ENCODE measurements at regions of chr16 and their contacts with region 1.

Region 1: GRCh38 chr16:47141773-47142485 is 1.8 kb downstream of the NETO2 start:
- DNase-seq: peak; percentile 93
- H3K4me3 Mint-ChIP-seq: peak overlapping the region; percentile 75
- H3K27ac Mint-ChIP-seq: no peak overlapping the region
- H3K4me1 Mint-ChIP-seq: peaks cover 10% of the 10 kb centered on the region
- H3K27me3 Mint-ChIP-seq: peaks cover 38% of the 10 kb centered on the region

Region 2: GRCh38 chr16:46947900-46948547 is 193.9 kb before region 1 on chr16:
- CTCF ChIA-PET with region 1: interaction called, 5 read pairs
- intact Hi-C with region 1: loop called (anchors 1 kb)
- DNase-seq: peak; percentile 63
- H3K4me3 Mint-ChIP-seq: no peak overlapping the region
- H3K27ac Mint-ChIP-seq: no peak overlapping the region
- H3K4me1 Mint-ChIP-seq: peaks cover 14% of the 10 kb centered on the region
- H3K27me3 Mint-ChIP-seq: no peaks in the 10 kb centered on the region

Region 3: DNA sequence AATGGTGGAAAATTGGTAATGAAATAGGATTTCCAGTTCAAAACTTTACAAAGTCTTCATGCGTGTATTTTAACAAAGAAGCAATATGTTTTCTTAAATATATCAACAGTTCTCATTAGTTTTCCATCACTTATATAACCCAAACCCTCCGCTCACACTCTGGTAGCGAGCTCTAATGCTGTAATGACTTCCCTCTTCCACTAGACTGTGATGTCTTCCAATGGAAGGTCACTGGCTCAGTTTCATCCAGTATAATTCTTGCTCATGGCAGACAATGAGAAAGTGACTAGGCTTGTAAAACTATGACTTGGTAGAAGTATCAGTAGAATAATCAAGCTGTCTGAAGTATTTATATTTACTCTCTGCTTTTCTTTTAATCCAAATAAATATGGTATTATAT is 31.0 kb before region 1 on chr16:
- CTCF ChIA-PET with region 1: interaction called, 11 read pairs
- intact Hi-C with region 1: loop called (anchors 1 kb)
- DNase-seq: no peak
- H3K4me3 Mint-ChIP-seq: no peak overlapping the region
- H3K27ac Mint-ChIP-seq: no peak overlapping the region
- H3K4me1 Mint-ChIP-seq: peaks cover 19% of the 10 kb centered on the region
- H3K27me3 Mint-ChIP-seq: no peaks in the 10 kb centered on the region

Region 4: DNA sequence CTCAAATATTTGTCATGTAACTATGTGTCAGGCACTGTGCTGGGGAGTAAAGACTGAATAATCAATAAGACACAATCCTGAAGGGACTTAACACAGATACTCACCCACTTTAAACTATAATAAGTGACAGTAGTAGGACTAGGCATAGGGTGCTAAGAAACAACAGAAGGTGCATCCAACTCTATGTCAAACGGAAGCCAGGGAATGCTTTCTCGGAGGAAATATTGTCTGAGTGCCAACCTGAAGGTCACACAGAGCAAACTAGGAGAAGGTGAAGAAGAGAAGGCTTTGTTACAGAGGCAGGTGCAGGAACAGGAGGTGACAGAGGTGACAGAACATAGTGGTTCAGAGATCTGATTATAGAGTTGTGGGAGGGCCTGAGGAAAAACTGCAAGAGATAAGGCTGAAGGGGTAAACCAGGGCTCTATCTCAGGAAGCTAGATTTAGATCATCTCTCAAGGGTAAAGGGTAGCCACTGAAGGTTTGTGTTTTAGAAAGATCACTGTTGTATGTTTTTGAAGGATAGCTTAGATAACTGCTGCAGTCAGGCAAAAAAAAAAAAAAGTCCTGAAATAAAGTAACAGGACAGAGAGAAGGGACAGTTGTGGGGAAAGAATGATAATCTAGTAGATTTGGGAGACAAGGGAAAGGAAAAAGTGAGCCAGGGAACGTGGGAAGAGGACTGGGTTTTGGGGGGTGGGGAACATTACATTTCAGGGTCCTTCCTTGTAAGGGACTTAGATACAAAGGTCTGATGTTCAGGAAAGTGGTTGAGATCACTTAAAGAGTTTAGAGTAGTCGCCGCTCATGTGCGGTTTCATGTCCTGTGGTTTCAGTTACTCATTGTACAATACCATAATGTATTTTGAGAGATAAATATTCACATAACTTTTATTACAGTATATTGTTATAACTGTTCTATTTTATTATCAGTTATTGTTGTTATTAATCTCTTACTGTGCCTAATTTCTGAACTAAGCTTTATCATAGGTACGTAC is 87.4 kb after region 1 on chr16:
- CTCF ChIA-PET with region 1: no interaction called
- intact Hi-C with region 1: no loop called
- DNase-seq: no peak
- H3K4me3 Mint-ChIP-seq: no peak overlapping the region
- H3K27ac Mint-ChIP-seq: no peak overlapping the region
- H3K4me1 Mint-ChIP-seq: no peaks in the 10 kb centered on the region
- H3K27me3 Mint-ChIP-seq: no peaks in the 10 kb centered on the region

Region 5: DNA sequence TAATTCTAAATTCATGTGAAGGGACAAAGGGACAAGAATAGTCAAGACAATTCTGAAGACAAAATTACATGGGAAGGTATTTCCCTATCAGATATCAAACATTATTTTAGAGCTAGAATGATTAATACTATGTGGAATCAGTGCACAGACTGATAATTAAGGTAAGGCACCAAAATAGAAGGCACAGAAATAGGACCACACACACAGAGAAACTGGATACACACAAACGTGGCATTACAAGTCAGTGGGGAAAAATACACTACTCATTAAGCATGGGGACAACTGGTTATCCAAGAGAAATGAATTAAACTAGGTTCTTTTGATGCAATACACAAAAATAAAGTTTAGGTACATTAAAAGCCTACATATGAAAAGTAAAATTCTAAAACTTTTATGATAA is 134.6 kb after region 1 on chr16:
- CTCF ChIA-PET with region 1: no interaction called
- intact Hi-C with region 1: no loop called
- DNase-seq: no peak
- H3K4me3 Mint-ChIP-seq: no peak overlapping the region
- H3K27ac Mint-ChIP-seq: no peak overlapping the region
- H3K4me1 Mint-ChIP-seq: no peaks in the 10 kb centered on the region
- H3K27me3 Mint-ChIP-seq: no peaks in the 10 kb centered on the region

Region 6: GRCh38 chr16:47311738-47312505 is 170.0 kb after region 1 on chr16:
- CTCF ChIA-PET with region 1: no interaction called
- intact Hi-C with region 1: no loop called
- DNase-seq: no peak
- H3K4me3 Mint-ChIP-seq: no peak overlapping the region
- H3K27ac Mint-ChIP-seq: no peak overlapping the region
- H3K4me1 Mint-ChIP-seq: no peaks in the 10 kb centered on the region
- H3K27me3 Mint-ChIP-seq: no peaks in the 10 kb centered on the region

Region 7: DNA sequence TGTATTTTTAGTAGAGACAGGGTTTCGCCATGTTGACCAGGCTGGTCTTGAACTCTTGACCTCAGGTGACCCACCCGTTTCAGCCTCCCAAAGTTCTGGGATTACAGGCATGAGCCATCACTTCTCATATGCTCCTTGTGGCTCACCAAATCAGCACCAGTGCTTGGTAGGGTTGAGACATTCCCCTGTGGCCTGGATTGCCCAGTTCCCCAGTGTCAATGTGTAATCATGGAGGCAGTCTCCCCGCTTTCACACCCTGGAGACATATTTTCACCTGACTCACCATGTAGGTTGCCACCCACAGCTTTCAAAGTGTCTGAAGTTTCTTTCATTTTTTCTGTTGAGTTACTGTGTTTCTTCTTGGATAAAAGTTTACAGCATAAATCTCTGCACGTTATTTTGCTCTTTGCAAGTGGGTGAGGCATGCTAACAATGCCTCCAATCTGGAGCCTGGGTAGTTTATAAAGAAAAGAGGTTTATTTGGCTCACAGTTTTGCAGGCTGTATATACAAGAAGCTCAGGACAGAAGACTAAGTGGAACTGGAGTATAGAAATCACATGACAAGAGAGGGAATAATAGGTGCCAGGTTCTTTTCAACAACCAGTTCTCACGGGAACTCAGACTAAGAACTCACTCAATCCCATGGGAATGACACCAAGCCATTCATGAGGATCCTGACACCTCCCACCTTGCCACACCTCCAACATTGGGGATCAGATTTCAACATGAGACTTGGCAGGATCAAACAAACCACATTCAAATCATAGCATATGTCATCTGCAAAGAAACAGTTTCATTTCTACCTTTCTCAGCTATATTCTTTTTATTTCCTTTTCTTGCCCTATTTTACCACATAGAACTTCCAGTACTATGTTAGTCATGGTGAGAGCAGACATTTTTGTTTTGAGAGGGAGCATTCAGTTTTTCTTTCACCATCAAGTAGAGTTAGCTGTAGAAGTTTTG is 432.4 kb after region 1 on chr16:
- CTCF ChIA-PET with region 1: no interaction called
- intact Hi-C with region 1: loop called (anchors 10 kb)
- DNase-seq: peak; percentile 70
- H3K4me3 Mint-ChIP-seq: no peak overlapping the region
- H3K27ac Mint-ChIP-seq: peak overlapping the region; percentile 86
- H3K4me1 Mint-ChIP-seq: peaks cover 56% of the 10 kb centered on the region
- H3K27me3 Mint-ChIP-seq: no peaks in the 10 kb centered on the region

Region 8: GRCh38 chr16:48117217-48118105 is 975.5 kb after region 1 on chr16:
- CTCF ChIA-PET with region 1: no interaction called
- intact Hi-C with region 1: loop called (anchors 1 kb)
- DNase-seq: peak; percentile 63
- H3K4me3 Mint-ChIP-seq: no peak overlapping the region
- H3K27ac Mint-ChIP-seq: no peak overlapping the region
- H3K4me1 Mint-ChIP-seq: peaks cover 2% of the 10 kb centered on the region
- H3K27me3 Mint-ChIP-seq: peaks cover 16% of the 10 kb centered on the region

Region 9: GRCh38 chr16:48244080-48244862 is 1102.3 kb after region 1 on chr16 and contains the start of gene LONP2:
- CTCF ChIA-PET with region 1: no interaction called
- intact Hi-C with region 1: loop called (anchors 5 kb)
- DNase-seq: peak; percentile 96
- H3K4me3 Mint-ChIP-seq: peak within 1 kb of the TSS; percentile 88
- H3K27ac Mint-ChIP-seq: peak within 1 kb of the TSS; percentile 79
- H3K4me1 Mint-ChIP-seq: peaks cover 38% of the 10 kb centered on the region
- H3K27me3 Mint-ChIP-seq: no peaks in the 10 kb centered on the region
- total RNA-seq, gene LONP2: 49.9 to 53.9 TPM